GM10248 (cell line): ENCODE measurements at regions of chr12 and their contacts with region 1.

Region 1: DNA sequence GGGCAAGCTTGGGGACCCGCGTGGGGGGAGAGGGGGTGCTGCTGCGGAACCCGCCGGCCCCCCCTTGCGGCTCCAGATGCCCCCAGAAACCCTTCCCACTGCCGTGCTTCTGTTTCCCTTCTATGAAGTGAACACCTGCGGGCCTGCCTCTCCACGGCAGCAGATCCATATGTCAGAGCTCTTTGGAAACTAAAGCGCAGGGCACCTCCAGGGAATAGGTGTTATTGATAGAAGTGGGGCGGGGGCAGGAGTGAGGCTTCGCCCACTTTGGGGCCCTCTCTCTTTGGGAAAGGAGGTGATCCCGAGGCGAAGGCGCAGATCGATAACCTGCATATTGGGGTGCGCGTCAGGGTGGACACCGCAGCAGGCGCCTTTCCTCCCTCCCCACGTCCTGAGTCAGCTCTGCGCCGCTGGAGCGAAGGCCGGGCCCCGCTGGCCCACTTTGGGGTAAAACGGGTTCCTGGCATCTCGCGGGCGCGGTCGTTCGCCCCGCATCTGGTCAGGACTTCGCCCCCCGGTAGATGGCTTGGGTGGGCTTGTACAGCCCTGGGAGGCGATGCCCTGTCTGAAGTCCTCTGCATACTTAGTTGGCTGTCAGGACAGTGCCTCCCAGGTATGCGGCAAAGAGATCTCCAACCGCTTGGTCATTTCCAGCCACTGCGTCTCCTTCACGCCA is 524 bp downstream of the KMT5A start:
- DNase-seq: no peak
- CTCF ChIP-seq: peak; percentile 2

Region 2: DNA sequence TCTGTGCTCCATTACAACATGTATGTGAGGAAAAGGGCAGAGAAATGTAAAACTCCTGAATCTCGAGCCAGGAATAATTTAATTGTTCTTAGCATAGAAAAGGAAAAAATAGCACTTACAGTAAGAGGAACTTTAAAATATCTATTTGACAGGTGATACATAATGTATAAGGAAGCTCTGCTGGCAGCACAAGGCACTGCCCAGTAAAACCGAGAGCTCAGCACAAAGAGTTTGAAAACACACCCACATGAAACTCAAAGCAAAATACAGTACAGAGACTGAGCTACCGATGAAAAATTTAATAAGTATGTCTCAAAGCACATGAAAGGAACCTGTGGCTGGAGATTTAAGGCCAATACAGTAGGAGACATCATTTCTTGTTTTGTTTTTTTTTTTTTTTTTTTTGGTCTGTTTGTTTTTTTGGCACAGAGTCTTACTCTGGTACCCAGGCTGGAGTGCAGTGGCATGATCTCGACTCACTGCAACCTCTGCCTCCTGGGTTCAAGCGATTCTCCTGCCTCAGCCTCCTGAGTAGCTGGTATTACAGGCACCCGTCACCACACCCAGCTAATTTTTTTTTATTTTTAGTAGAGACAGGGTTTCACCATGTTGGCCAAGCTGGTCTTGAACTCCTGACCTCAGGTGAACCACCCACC is 981.2 kb before region 1 on chr12:
- CTCF ChIA-PET with region 1: no interaction called
- POLR2A ChIA-PET with region 1: no interaction called
- DNase-seq: peak; percentile 52
- CTCF ChIP-seq: no peak

Region 3: GRCh38 chr12:122752464-122753318 is 631.8 kb before region 1 on chr12 and contains the start of gene DENR:
- CTCF ChIA-PET with region 1: no interaction called
- POLR2A ChIA-PET with region 1: no interaction called
- DNase-seq: peak; percentile 96
- CTCF ChIP-seq: peak; percentile 95

Region 4: GRCh38 chr12:123243671-123244262 is 140.7 kb before region 1 on chr12:
- CTCF ChIA-PET with region 1: no interaction called
- POLR2A ChIA-PET with region 1: no interaction called
- DNase-seq: no peak
- CTCF ChIP-seq: no peak

Region 5: GRCh38 chr12:123365025-123365917 is 19.2 kb before region 1 on chr12:
- CTCF ChIA-PET with region 1: interaction called, 20 read pairs
- POLR2A ChIA-PET with region 1: interaction called, 26 read pairs
- DNase-seq: peak; percentile 97
- CTCF ChIP-seq: peak; percentile 83